HEK293 (cell line): ENCODE measurements at regions of chr17 and their contacts with region 1.

Region 1: DNA sequence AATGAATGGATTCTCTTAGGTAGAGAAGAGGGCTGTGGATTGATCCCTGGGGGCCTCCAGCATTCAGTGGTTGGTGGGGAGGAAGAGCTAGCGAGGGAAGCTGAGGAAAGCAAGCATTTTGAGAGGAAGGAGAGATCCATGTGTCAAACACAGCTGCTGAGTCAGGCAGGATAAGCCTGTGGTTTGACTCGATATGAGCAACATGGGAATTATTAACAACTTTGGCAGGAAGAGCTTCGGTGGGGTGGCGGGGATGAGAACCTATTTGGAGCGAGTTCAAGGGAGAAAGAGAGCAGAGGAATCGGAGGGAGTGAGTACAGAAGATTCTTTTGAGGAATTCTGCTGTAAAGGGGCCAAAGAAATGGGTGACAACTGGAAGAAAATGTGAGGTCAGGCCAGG is 59.5 kb upstream of the CDC42EP4 start:
- H3K4me3 ChIP-seq: no peak overlapping the region
- H3K27ac ChIP-seq: no peak overlapping the region
- H3K4me1 ChIP-seq: no peaks in the 10 kb centered on the region
- CTCF ChIP-seq: no peak

Region 2: DNA sequence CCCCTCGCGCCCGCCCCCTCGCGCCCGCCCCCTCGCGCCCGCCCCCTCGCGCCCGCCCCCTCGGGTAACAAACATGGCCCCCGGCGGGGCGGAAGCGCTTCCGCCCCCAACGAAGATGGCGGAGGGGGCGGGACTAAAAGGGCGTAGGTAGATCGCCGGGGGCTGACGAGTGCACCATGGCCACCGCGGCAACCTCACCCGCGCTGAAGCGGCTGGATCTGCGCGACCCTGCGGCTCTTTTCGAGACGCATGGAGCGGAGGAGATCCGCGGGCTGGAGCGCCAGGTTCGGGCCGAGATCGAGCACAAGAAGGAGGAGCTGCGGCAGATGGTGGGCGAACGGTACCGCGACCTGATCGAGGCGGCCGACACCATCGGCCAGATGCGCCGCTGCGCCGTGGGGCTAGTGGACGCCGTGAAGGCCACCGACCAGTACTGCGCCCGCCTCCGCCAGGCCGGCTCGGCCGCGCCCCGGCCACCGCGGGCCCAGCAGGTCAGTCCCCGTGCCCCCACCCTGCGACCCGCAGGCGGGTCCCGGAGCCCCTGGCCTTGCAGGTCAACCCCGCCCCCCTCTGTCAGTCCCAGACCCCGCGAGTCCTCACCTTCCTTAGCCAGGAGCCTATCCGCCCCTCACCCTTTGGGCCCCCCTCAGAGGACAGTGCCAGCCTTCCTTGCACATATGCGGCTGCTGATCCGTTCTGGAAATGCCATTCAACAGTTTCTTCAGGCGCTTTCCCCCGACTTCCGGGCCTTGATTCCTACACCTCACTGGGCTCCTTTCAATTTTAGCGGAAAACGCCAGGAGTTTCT is 178.2 kb before region 1 on chr17 and contains the start of gene COG1:
- CTCF ChIA-PET with region 1: interaction called, 38 read pairs
- POLR2A ChIA-PET with region 1: no interaction called
- H3K4me3 ChIP-seq: peak within 1 kb of the TSS; percentile 93
- H3K27ac ChIP-seq: peak within 1 kb of the TSS; percentile 98
- H3K4me1 ChIP-seq: peaks cover 3% of the 10 kb centered on the region; the same call in 1 of the 2 replicates
- CTCF ChIP-seq: peak; percentile 73; the same call in 1 of the 2 replicates

Region 3: GRCh38 chr17:73255671-73256181 is 115.6 kb before region 1 on chr17:
- CTCF ChIA-PET with region 1: interaction called, 315 read pairs
- POLR2A ChIA-PET with region 1: interaction called, 4 read pairs
- H3K4me3 ChIP-seq: no peak overlapping the region
- H3K27ac ChIP-seq: no peak overlapping the region
- H3K4me1 ChIP-seq: no peaks in the 10 kb centered on the region
- CTCF ChIP-seq: peak; percentile 90

Region 4: DNA sequence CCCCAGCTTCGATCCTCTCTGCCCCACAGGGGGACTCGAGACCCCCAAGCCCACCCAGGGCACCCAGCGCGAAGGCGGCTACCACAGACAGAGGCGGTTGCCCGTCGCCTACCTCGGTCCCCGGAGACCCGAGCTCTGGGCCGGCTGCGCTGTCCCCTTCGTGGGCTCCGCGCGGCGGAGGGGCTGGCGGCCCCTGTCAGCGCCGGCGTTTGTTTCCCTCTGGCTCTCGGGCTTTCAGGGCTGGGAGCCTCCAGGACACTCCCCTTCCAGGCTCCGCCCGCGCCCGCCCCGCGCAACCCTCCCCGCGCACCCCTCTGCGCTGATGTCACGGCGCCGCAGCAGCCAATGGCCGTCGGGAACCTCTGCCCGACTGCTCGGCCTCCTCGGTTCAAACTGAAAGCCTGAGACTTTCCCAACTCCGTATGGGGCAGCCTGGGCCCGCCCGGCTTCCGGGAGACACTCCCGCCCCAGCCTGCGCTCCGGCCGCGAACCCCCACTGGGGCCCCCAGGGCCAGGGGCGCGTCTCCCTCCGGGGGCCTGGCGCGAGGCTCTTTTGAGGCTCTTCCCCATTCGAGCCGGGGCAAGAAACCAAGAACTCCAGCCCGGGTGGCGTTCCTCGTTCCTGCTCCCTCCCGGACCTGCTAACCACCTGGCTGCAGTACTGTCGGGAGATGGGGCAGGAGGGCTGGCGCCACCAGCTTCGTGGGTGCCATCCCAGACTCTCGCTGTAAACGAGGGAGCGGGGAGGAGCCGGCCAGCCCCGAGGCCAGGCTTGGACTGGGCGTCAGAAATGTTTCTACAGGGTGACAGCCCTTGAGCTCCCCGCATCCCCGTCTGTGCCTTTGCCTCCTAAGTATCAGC is 59.3 kb before region 1 on chr17 and contains the start of gene CDC42EP4:
- CTCF ChIA-PET with region 1: interaction called, 8 read pairs
- POLR2A ChIA-PET with region 1: interaction called, 11 read pairs
- H3K4me3 ChIP-seq: peak within 1 kb of the TSS; percentile 86
- H3K27ac ChIP-seq: peak within 1 kb of the TSS; percentile 88
- H3K4me1 ChIP-seq: peaks cover 19% of the 10 kb centered on the region
- CTCF ChIP-seq: no peak

Region 5: GRCh38 chr17:73357318-73357717 is 14.0 kb before region 1 on chr17:
- CTCF ChIA-PET with region 1: interaction called, 16 read pairs
- POLR2A ChIA-PET with region 1: no interaction called
- H3K4me3 ChIP-seq: no peak overlapping the region
- H3K27ac ChIP-seq: no peak overlapping the region
- H3K4me1 ChIP-seq: no peaks in the 10 kb centered on the region
- CTCF ChIP-seq: no peak

Region 6: DNA sequence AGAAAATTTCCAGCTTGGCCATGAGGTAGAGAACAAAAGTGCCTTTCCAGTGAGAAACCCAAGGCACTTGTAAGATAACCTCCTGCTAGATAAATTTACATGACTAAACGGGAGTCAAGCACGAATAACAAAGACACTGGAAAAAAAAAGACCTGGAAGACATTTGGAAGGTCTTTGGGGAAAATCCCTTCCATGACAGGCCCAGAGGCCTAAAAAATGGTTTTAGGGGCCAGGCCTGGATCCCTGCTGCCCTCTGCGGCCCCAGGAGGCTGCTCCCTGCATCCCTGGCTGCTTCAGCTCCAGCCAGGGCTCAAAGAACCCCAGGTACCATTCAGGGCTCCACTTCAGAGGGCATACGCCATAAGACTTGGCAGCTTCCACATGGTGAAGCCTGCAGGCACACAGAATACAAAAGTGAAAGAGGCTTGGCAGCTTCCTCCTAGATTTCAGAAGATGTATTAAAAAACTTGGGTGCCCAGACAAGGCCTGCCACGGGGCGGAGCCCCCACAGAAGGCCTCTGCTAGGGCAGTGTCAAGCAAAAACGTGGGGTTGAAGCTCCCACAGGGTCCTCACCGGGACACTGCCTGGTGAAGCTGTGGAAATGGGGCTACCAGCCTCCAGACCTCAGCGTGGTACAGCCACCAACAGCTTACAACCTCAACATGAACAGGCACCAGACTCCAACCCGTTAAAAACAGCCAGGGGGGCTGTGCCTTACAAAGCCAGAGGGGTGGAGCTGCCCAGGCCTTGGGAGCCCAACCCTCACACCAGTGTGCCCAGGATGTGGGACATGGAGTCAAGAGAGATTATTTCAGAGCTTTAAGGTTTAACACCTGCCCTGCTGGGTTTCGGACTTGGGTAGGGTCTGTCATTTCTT is 195.9 kb after region 1 on chr17:
- CTCF ChIA-PET with region 1: no interaction called
- POLR2A ChIA-PET with region 1: no interaction called
- H3K4me3 ChIP-seq: no peak overlapping the region
- H3K27ac ChIP-seq: no peak overlapping the region
- H3K4me1 ChIP-seq: no peaks in the 10 kb centered on the region
- CTCF ChIP-seq: no peak